ENCODE measurements at regions of chr4 and their contacts with region 1.

Region 1: DNA sequence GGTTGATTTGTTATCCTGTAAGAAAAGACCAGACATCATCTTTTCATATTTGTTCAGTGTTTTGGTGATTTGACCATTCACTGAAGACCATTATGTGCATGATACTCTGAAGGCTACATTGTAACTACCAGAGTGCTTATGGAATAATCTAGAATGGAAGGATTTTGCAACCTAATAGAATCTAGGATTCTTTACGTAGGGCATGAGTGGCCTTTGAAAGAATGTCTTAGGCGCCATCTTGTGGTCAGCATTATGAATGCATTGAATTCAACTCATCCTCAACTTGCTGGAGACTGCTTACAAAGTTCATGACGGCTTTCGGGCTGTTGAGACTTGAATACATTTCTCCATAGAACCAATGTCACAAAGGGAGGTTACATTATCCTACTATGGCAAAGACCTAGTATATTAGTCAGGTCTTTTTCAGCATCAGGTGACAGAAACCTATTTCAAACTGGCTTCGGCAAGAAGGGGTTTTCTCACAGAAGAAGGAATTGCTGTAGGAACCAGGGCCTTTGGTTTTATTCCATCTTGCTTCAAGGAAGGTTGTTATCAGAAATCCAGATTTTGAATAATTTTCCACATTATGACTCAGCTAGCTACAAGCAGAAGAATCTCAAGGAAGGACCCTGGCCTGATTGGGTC is 104.1 kb downstream of the GPAT3 start:
- DNase-seq: peak in 1 of 2 donors; percentile 74
- H3K4me3 ChIP-seq: no peak overlapping the region
- CTCF ChIP-seq: peak in 1 of 3 donors; percentile 45
- POLR2A ChIP-seq: no peak

Region 2: GRCh38 chr4:83504986-83505385 is 135.0 kb before region 1 on chr4:
- intact Hi-C with region 1: loop called (anchors 5 kb)
- DNase-seq: no peak
- H3K4me3 ChIP-seq: no peak overlapping the region
- CTCF ChIP-seq: no peak
- POLR2A ChIP-seq: no peak

Region 3: GRCh38 chr4:84263415-84263814 is 623.4 kb after region 1 on chr4:
- intact Hi-C with region 1: loop called (anchors 5 kb)
- DNase-seq: no peak
- H3K4me3 ChIP-seq: no peak overlapping the region
- CTCF ChIP-seq: no peak
- POLR2A ChIP-seq: no peak

Region 4: GRCh38 chr4:84401701-84402306 is 761.8 kb after region 1 on chr4:
- intact Hi-C with region 1: no loop called
- DNase-seq: no peak
- H3K4me3 ChIP-seq: no peak overlapping the region
- CTCF ChIP-seq: no peak
- POLR2A ChIP-seq: no peak

Region 5: DNA sequence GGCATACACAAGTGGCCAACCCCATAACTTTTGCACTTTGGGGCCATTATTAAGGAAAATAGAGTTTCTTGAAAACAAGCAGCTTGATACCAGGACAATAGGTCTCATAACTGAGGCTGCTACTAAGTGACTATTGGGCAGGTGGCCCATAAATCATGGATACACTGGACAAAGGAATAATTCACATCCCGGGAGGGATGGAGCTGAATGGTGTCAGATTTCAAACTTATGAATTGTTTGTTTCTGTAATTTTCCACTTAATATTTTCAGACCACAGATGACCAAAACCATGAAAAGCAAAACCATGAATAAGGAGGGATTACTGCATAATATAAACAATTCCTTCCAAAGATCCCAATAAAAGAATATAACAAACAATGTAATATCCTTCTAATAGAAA is 1212.1 kb after region 1 on chr4:
- intact Hi-C with region 1: no loop called
- DNase-seq: no peak
- H3K4me3 ChIP-seq: no peak overlapping the region
- CTCF ChIP-seq: no peak
- POLR2A ChIP-seq: no peak